ENCODE measurements at regions of chr12 and their contacts with region 1.

Region 1: DNA sequence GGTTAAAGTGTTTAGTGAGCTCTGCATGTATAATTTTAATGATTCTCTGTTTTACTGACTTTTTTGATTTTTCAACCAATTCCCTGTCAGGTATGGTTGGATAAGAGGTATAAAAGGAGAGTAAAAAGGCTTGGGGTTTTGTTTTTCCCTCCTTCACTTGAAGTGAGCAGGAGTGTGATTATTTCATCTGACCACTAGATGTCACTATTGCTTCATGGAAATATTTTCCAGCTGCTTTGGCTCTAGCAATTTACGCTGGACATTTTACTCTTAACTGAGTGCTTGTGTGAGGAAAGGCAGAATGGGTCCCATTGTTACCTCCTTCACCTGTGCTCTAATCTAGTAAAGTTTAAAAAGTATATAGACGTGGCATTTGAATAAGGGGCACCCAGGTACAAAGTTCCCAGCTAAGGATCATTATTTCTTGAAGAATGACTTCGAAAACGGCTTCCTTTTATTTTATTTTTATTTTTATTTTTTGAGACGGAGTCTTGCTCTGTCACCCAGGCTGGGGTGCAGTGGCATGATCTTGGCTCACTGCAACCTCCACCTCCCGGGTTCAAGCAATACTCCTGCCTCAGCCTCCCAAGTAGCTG is 66.5 kb downstream of the TBC1D30 start:
- DNase-seq: no peak
- H3K4me3 ChIP-seq: no peak overlapping the region
- H3K27ac ChIP-seq: no peak overlapping the region
- H3K4me1 ChIP-seq: peaks cover 0 to 5% (median 2%) of the 10 kb centered on the region in 4 experiments; a peak in 3 of 7 replicates
- H3K27me3 ChIP-seq: no peaks in the 10 kb centered on the region
- CTCF ChIP-seq: peak in 2 of 3 experiments; percentile 62 to 73; a peak in 3 of 4 replicates
- EP300 ChIP-seq: no peak
- POLR2A ChIP-seq: no peak
- RAD21 ChIP-seq: peak; percentile 94 to 97

Region 2: GRCh38 chr12:64679487-64679983 is 211.4 kb before region 1 on chr12:
- CTCF ChIA-PET with region 1: no interaction called
- POLR2A ChIA-PET with region 1: no interaction called
- DNase-seq: no peak
- H3K4me3 ChIP-seq: no peak overlapping the region
- H3K27ac ChIP-seq: no peak overlapping the region
- H3K4me1 ChIP-seq: peaks cover 2 to 16% (median 7%) of the 10 kb centered on the region in 4 experiments; a peak in 6 of 7 replicates
- H3K27me3 ChIP-seq: no peaks in the 10 kb centered on the region
- CTCF ChIP-seq: no peak
- EP300 ChIP-seq: no peak
- POLR2A ChIP-seq: no peak
- RAD21 ChIP-seq: no peak

Region 3: GRCh38 chr12:64780531-64781279 is 110.3 kb before region 1 on chr12:
- CTCF ChIA-PET with region 1: no interaction called
- POLR2A ChIA-PET with region 1: no interaction called
- DNase-seq: peak in 1 of 2 experiments; percentile 73
- H3K4me3 ChIP-seq: peak overlapping the region; percentile 32 to 68 (median 48)
- H3K27ac ChIP-seq: no peak overlapping the region
- H3K4me1 ChIP-seq: peaks cover 0 to 6% (median 2%) of the 10 kb centered on the region in 4 experiments; a peak in 2 of 7 replicates
- H3K27me3 ChIP-seq: peaks cover 2 to 34% (median 22%) of the 10 kb centered on the region in 4 experiments
- CTCF ChIP-seq: no peak
- EP300 ChIP-seq: no peak
- POLR2A ChIP-seq: peak in 1 of 2 experiments; percentile 42; a peak in 2 of 3 replicates
- RAD21 ChIP-seq: no peak

Region 4: DNA sequence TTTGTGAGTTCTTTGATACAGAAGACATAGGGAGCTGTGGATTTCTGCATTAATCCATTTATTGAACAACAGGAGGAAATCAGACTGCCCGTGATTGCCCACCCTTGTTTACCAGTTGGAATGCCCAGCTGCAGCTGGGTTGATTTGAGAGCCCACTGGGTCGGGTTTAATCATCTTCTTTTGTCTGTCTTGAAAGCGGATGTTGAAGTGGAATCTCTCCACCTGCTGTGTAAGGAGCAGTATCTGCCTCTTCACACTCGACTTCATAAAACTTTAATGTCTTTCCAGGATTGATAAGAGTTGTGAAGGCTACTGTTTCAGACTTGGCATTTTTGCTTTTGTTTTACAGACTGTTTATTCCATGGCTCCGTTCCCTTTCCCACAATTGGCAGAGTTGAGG is 26.7 kb before region 1 on chr12:
- CTCF ChIA-PET with region 1: interaction called, 12 read pairs
- POLR2A ChIA-PET with region 1: no interaction called
- DNase-seq: no peak
- H3K4me3 ChIP-seq: no peak overlapping the region
- H3K27ac ChIP-seq: no peak overlapping the region
- H3K4me1 ChIP-seq: peaks cover 0 to 4% (median under 1%) of the 10 kb centered on the region in 4 experiments; a peak in 2 of 7 replicates
- H3K27me3 ChIP-seq: no peaks in the 10 kb centered on the region
- CTCF ChIP-seq: no peak
- EP300 ChIP-seq: no peak
- POLR2A ChIP-seq: no peak
- RAD21 ChIP-seq: no peak

Region 5: GRCh38 chr12:65039306-65039705 is 148.3 kb after region 1 on chr12:
- CTCF ChIA-PET with region 1: interaction called, 10 read pairs
- POLR2A ChIA-PET with region 1: no interaction called
- DNase-seq: no peak
- H3K4me3 ChIP-seq: no peak overlapping the region
- H3K27ac ChIP-seq: no peak overlapping the region
- H3K4me1 ChIP-seq: no peaks in the 10 kb centered on the region
- H3K27me3 ChIP-seq: no peaks in the 10 kb centered on the region
- CTCF ChIP-seq: peak; percentile 23 to 44 (median 35)
- EP300 ChIP-seq: no peak
- POLR2A ChIP-seq: no peak
- RAD21 ChIP-seq: peak; percentile 38 to 64

Region 6: GRCh38 chr12:65100140-65100539 is 209.2 kb after region 1 on chr12:
- CTCF ChIA-PET with region 1: interaction called, 74 read pairs
- POLR2A ChIA-PET with region 1: interaction called, 4 read pairs
- DNase-seq: no peak
- H3K4me3 ChIP-seq: no peak overlapping the region
- H3K27ac ChIP-seq: no peak overlapping the region
- H3K4me1 ChIP-seq: peaks cover 0 to 4% (median 0%) of the 10 kb centered on the region in 4 experiments; a peak in 1 of 7 replicates
- H3K27me3 ChIP-seq: no peaks in the 10 kb centered on the region
- CTCF ChIP-seq: peak in 2 of 3 experiments; percentile 50 to 61; a peak in 3 of 4 replicates
- EP300 ChIP-seq: no peak
- POLR2A ChIP-seq: no peak
- RAD21 ChIP-seq: peak; percentile 89 to 90

Region 7: DNA sequence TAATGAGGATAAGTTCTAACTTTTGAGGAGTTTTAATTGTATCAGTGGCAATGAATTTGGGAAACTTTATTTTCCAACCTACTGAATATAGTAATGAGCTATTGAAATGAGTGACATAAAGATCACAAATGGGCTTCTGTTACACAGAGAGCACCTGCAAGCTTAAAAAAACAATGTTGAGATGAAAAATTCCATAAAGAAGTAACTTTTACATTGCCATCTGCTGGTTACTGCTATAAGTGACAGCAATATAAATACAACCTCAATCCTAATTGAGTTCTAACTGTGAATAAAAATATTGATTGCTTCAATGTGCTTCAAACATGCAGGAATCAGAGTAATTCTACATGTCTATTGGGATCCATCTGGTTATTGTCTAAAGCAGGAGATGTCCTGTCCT is 216.0 kb after region 1 on chr12:
- CTCF ChIA-PET with region 1: interaction called, 74 read pairs
- POLR2A ChIA-PET with region 1: interaction called, 4 read pairs
- DNase-seq: no peak
- H3K4me3 ChIP-seq: no peak overlapping the region
- H3K27ac ChIP-seq: no peak overlapping the region
- H3K4me1 ChIP-seq: no peaks in the 10 kb centered on the region
- H3K27me3 ChIP-seq: no peaks in the 10 kb centered on the region
- CTCF ChIP-seq: peak in 1 of 3 experiments; percentile 38; a peak in 2 of 4 replicates
- EP300 ChIP-seq: no peak
- POLR2A ChIP-seq: no peak
- RAD21 ChIP-seq: no peak

Region 8: GRCh38 chr12:65121049-65121955 is 230.3 kb after region 1 on chr12 and contains the start of gene WIF1:
- CTCF ChIA-PET with region 1: interaction called, 55 read pairs
- POLR2A ChIA-PET with region 1: no interaction called
- DNase-seq: peak; percentile 56 to 86
- H3K4me3 ChIP-seq: peak within 1 kb of the TSS; percentile 23 to 60 (median 42)
- H3K27ac ChIP-seq: no peak within 1 kb of the TSS
- H3K4me1 ChIP-seq: no peaks in the 10 kb centered on the region; a peak in 1 of 7 replicates
- H3K27me3 ChIP-seq: peaks cover 0 to 25% (median 18%) of the 10 kb centered on the region in 4 experiments; a peak in 6 of 7 replicates
- CTCF ChIP-seq: peak; percentile 60 to 68 (median 68)
- EP300 ChIP-seq: no peak
- POLR2A ChIP-seq: no peak
- RAD21 ChIP-seq: peak; percentile 7 to 12; a peak in 2 of 4 replicates
- total RNA-seq, gene WIF1: 7.8 and 9.1 TPM in 2 replicates

Region 9: DNA sequence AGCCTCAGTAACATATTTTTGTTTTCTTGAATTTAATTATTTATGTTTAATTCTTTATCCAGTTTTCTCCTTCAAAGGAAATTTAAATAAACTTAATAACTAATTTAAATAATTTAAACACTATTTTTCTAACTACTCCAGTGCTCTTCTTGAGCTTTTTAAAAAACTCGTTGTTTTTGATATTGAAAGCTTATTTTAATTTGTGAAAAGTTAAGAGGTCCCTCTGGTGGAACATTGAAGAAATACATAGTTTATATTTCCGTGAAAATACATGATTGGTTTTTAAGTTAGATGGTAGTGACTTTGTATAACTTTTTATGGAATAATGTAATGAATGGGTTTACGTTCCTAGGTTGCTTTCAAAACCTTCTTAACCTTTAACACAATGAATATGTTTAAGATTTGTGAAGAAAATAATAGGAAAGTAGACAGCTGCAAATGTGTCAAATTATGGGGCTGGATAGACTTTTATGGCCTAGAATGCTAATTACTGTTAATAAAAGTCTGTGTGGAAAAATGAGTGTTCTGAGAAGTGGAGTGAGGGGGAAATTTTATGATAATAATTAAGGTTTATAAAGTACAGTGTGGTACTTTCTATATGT is 341.6 kb after region 1 on chr12:
- CTCF ChIA-PET with region 1: interaction called, 17 read pairs
- POLR2A ChIA-PET with region 1: no interaction called
- DNase-seq: no peak
- H3K4me3 ChIP-seq: no peak overlapping the region
- H3K27ac ChIP-seq: no peak overlapping the region
- H3K4me1 ChIP-seq: no peaks in the 10 kb centered on the region
- H3K27me3 ChIP-seq: no peaks in the 10 kb centered on the region
- CTCF ChIP-seq: no peak; a peak in 1 of 4 replicates
- EP300 ChIP-seq: no peak
- POLR2A ChIP-seq: no peak
- RAD21 ChIP-seq: peak in 1 of 2 experiments; percentile 18; a peak in 2 of 4 replicates

Region 10: GRCh38 chr12:65470256-65470655 is 579.3 kb after region 1 on chr12:
- CTCF ChIA-PET with region 1: no interaction called
- POLR2A ChIA-PET with region 1: no interaction called
- DNase-seq: no peak
- H3K4me3 ChIP-seq: no peak overlapping the region
- H3K27ac ChIP-seq: no peak overlapping the region
- H3K4me1 ChIP-seq: no peaks in the 10 kb centered on the region
- H3K27me3 ChIP-seq: no peaks in the 10 kb centered on the region
- CTCF ChIP-seq: no peak
- EP300 ChIP-seq: no peak
- POLR2A ChIP-seq: no peak
- RAD21 ChIP-seq: no peak

Measured in H1 (cell line).